Heart right ventricle (tissue), 16 donors: ENCODE measurements at regions of chr1 and their contacts with region 1.

Region 1: DNA sequence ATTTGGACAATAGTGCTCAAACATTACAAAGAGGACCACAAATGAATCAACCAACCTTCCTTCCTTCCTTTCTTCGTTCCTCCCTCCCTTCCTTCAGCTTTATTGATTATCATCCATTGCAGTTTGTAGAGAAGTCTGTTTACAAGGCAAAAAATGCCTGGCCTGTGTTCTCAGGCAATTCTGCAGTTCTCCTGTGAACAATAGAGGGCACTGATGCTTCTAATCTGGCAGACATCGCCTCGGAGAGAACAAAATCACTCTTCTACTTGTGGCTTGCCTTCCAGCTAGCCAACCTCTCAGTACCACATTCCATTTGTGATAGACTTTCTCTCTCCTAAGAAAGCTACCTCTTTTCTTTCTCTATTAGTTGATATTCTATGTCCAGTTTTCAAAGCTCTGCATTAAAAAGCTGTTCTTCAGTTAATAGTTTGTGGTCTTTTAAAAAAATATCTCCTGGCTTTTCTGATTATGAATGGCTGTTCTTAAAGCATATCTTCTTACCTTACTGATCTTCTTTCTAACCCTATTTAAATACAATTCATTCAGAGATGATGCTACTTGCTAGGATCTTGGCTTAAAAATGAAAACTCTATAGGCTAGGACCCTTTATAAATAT is 26.9 kb upstream of the ESRRG start:
- DNase-seq: peak in 1 of 2 donors; percentile 41
- ATAC-seq: peak in 7 of 8 donors; percentile 55 to 93 (median 84)
- H3K4me3 ChIP-seq: no peak overlapping the region
- H3K27ac ChIP-seq: peak overlapping the region in 4 of 10 donors; percentile 13 to 42 (median 34)
- H3K4me1 ChIP-seq: peaks cover 0 to 13% (median 0%) of the 10 kb centered on the region in 9 donors
- H3K27me3 ChIP-seq: no peaks in the 10 kb centered on the region
- CTCF ChIP-seq: peak; percentile 15 to 74 (median 54)

Region 2: GRCh38 chr1:216502528-216503162 is 247.5 kb before region 1 on chr1:
- intact Hi-C with region 1: no loop called
- DNase-seq: no peak
- ATAC-seq: no peak
- H3K4me3 ChIP-seq: no peak overlapping the region
- H3K27ac ChIP-seq: no peak overlapping the region
- H3K4me1 ChIP-seq: peaks cover 0 to 6% (median 0%) of the 10 kb centered on the region in 9 donors
- H3K27me3 ChIP-seq: no peaks in the 10 kb centered on the region
- CTCF ChIP-seq: no peak

Region 3: GRCh38 chr1:216815260-216816131 is 65.4 kb after region 1 on chr1:
- intact Hi-C with region 1: loop called in 1 of 10 experiments (anchors 10 kb)
- DNase-seq: peak; percentile 10 to 45
- ATAC-seq: peak; percentile 82 to 95 (median 87)
- H3K4me3 ChIP-seq: no peak overlapping the region
- H3K27ac ChIP-seq: peak overlapping the region; percentile 36 to 84 (median 74)
- H3K4me1 ChIP-seq: peaks cover 0 to 40% (median 14%) of the 10 kb centered on the region in 9 donors
- H3K27me3 ChIP-seq: no peaks in the 10 kb centered on the region
- CTCF ChIP-seq: no peak

Region 4: GRCh38 chr1:216944864-216945510 is 194.9 kb after region 1 on chr1:
- intact Hi-C with region 1: loop called in 1 of 10 experiments (anchors 10 kb)
- DNase-seq: no peak
- ATAC-seq: no peak
- H3K4me3 ChIP-seq: no peak overlapping the region
- H3K27ac ChIP-seq: no peak overlapping the region
- H3K4me1 ChIP-seq: no peaks in the 10 kb centered on the region
- H3K27me3 ChIP-seq: no peaks in the 10 kb centered on the region
- CTCF ChIP-seq: no peak

Region 5: DNA sequence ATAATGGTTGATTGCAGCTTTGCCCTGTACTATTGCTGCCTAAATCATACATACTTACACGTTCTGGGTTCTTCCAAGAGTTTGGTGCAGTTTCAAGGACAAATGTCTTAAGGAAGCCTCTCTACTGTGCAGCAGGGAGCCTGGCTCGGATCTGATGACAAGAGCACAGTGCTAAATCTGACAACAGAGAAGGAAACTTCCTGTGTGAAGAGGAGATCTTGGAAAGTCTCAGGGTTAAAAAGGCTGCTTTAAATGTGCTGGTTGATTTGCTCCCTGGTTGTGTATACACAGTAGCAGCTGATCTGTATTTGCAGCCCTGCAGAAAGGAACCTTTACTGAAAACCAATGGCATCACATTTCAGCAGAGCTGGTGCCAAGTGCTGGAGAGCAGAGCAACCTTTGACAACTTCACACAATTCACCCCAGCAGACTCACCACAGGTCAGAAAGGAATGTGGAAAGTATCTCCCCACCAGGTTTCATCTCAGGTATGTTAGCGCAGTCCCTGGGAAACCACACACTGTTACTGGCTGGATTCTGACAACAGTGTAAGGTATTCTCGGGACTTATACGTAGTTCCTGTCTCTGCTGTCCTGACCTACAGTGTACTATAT is 328.1 kb after region 1 on chr1:
- intact Hi-C with region 1: loop called in 5 of 10 experiments (anchors 5 to 10 kb)
- DNase-seq: no peak
- ATAC-seq: peak; percentile 49 to 84 (median 74)
- H3K4me3 ChIP-seq: peak overlapping the region in 9 of 10 donors; percentile 2 to 48 (median 36)
- H3K27ac ChIP-seq: peak overlapping the region; percentile 0 to 76 (median 54)
- H3K4me1 ChIP-seq: peaks cover 0 to 15% (median 0%) of the 10 kb centered on the region in 9 donors
- H3K27me3 ChIP-seq: no peaks in the 10 kb centered on the region
- CTCF ChIP-seq: no peak

Region 6: DNA sequence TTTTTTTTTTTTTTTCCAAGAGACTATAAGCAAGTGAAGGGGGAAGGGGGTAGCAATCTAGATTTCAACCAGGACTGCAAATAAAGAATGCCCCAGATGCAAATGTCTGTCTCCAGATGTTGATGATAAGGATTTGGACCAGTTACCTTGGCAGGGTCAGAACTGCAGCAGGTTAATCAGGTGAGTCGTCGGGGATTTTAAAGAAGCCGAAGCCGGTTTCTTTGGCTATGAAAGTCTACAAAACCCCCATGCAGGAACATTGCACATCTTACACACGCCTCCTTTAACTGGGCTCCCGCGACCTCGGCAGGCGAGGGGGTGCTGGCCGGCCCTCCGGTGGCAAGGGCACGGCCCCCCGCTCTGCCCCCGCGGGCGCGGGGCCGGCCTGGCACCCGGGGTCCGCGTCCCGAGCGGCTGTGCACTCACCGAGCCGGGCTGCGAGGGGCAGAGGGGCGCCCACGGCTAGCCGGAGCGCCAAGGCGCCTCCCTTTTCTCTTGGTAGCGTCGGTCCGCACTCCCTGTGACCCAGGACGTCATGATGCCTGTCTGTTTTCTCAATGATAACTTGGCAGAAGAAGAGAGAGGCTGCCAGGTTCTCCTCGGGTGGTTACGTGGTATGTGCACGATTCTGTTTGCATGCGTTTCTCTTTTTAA is 339.4 kb after region 1 on chr1:
- intact Hi-C with region 1: loop called in 2 of 10 experiments (anchors 10 kb)
- DNase-seq: peak; percentile 30 to 32
- ATAC-seq: peak; percentile 73 to 91 (median 84)
- H3K4me3 ChIP-seq: peak overlapping the region; percentile 33 to 66 (median 51)
- H3K27ac ChIP-seq: peak overlapping the region; percentile 76 to 93 (median 90)
- H3K4me1 ChIP-seq: peaks cover 0 to 11% (median 3%) of the 10 kb centered on the region in 9 donors
- H3K27me3 ChIP-seq: peaks cover 0 to 23% (median 3%) of the 10 kb centered on the region in 7 donors
- CTCF ChIP-seq: no peak

Region 7: DNA sequence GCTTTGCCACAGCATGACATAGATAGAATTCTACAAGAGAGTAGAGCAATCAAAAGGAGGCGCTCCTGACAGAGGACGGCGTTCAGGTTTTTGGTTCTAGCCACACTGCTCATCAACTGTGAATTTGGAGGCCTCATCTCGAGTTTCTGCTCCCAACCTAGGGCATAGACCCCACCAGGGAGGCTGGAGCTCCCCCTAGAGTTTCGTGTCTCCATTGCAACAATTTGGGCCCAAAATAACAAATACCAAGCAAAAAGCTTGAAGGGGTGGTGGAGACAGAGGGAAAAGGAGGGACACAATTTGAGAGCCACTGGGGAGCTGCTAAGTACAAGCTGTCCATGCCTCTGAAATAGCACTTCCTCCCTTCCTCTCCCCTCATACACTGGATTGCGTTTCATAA is 583.8 kb after region 1 on chr1:
- intact Hi-C with region 1: loop called in 4 of 10 experiments (anchors 5 to 10 kb)
- DNase-seq: peak in 1 of 2 donors; percentile 5
- ATAC-seq: no peak
- H3K4me3 ChIP-seq: no peak overlapping the region
- H3K27ac ChIP-seq: no peak overlapping the region
- H3K4me1 ChIP-seq: peaks cover 0 to 13% (median 0%) of the 10 kb centered on the region in 9 donors
- H3K27me3 ChIP-seq: no peaks in the 10 kb centered on the region
- CTCF ChIP-seq: peak in 8 of 9 donors; percentile 13 to 55 (median 50)